GM18951 (cell line): ENCODE measurements at regions of chr2 and their contacts with region 1.

Region 1: DNA sequence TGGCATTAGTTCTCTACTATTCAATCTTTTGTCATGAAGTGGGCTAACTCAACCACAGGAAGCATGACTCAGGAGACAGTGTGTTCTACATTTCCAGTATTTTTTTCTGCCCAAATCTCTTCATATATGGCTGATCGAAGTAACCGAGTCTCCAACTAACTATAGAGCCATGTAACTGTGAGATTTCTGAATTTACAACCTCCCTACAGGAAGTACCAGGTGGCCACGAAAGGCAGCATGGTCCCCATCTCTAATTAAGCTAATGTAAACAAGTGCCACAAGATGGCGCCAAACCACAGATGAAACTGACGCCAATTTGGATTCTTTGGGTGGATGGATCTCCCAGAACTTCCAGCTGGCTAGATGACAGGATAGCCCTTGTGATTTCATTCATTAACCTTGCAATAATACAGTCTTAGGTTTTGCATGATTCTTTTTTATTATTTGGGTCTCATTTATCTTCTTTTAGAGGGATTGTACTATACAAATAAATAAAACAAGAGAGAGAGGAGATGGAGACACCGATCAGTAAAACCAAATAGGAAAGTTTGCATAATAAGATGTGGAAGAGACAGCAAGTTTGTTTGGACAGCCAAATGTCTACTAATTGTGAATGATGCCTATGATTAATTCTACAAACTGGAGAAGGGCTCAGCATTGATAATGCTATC is 18.3 kb upstream of the ARHGAP15 start:
- POLR2A ChIP-seq: no peak

Region 2: GRCh38 chr2:143229952-143230351 is 119.1 kb after region 1 on chr2:
- in situ Hi-C with region 1: loop called (anchors 10 kb)
- POLR2A ChIP-seq: no peak

Region 3: DNA sequence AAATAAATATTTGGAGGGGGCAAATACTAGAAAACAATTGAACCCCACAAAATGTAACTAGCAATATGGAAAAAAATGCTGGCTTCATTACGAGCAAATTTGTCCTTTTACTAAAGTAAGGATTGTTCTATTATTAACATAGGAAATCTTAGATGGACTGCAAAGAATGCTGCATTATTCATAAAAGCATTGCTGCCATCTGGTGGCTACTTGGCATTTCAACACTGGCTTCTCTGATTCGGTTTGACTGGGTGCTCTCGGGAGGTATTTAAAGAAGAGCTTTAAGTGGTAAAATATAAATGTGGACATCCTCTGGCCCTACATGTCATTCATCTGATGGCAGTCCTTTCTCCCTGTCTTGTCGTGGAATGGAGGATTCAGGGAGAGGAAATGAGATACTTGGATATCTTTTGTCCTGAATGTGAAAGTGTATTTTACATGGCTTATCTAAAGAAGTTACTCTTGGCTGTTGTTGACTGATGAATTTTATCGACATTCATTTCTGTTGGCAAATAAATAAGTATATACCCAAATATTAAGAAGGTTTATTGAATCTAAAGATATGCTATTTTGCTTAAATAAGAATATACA is 148.6 kb after region 1 on chr2:
- in situ Hi-C with region 1: loop called (anchors 10 kb)
- POLR2A ChIP-seq: no peak

Region 4: GRCh38 chr2:143451642-143452281 is 340.9 kb after region 1 on chr2:
- in situ Hi-C with region 1: no loop called
- POLR2A ChIP-seq: no peak